ENCODE measurements at regions of chr6 and their contacts with region 1.

Region 1: DNA sequence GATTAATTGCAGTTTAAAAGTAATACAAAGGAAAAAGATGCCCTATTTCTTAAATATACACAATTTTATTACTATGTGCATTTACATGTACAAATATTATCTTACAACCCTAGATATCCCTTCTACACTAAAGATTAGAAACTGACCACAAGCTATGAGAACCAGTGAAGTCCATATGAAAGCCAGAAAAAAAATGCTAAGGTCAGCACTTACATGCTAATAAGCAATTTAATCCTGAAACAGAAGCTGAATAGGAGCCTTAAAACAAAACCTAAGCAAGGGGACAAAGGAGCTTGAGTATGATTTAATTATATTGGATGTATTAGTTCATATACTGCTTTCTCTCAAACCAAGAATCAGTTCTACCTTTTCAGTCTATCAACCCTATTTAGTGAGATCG is 14.2 kb downstream of the CEP162 start:
- DNase-seq: no peak
- H3K4me3 ChIP-seq: no peak overlapping the region
- H3K4me3 Mint-ChIP-seq: no peak overlapping the region
- H3K27ac Mint-ChIP-seq: no peak overlapping the region
- H3K4me1 ChIP-seq: peaks cover 7% of the 10 kb centered on the region
- H3K4me1 Mint-ChIP-seq: peaks cover 6% of the 10 kb centered on the region
- H3K27me3 ChIP-seq: no peaks in the 10 kb centered on the region
- H3K27me3 Mint-ChIP-seq: no peaks in the 10 kb centered on the region
- CTCF ChIP-seq: no peak

Region 2: DNA sequence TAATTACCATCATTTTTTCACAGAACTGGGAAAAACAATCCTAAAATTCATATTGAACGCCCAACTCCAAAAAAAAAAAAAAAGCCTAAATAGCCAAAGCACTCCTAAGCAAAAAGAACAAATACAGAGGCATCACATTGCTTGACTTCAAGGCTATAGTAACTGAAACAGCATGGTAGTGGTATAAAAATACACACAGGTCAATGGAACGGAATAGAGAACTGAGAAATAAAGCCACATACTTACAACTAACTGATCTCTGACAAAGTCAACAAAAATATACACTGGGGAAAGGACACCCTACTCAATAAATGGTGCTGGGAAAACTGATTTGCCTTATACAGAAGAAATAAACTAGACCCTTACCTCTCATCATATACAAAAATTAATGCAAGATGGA is 90.0 kb before region 1 on chr6:
- CTCF ChIA-PET with region 1: no interaction called
- POLR2A ChIA-PET with region 1: interaction called, 13 read pairs
- intact Hi-C with region 1: no loop called
- DNase-seq: no peak
- H3K4me3 ChIP-seq: no peak overlapping the region
- H3K4me3 Mint-ChIP-seq: no peak overlapping the region
- H3K27ac Mint-ChIP-seq: no peak overlapping the region
- H3K4me1 ChIP-seq: no peaks in the 10 kb centered on the region
- H3K4me1 Mint-ChIP-seq: no peaks in the 10 kb centered on the region
- H3K27me3 ChIP-seq: no peaks in the 10 kb centered on the region
- H3K27me3 Mint-ChIP-seq: no peaks in the 10 kb centered on the region
- CTCF ChIP-seq: no peak

Region 3: DNA sequence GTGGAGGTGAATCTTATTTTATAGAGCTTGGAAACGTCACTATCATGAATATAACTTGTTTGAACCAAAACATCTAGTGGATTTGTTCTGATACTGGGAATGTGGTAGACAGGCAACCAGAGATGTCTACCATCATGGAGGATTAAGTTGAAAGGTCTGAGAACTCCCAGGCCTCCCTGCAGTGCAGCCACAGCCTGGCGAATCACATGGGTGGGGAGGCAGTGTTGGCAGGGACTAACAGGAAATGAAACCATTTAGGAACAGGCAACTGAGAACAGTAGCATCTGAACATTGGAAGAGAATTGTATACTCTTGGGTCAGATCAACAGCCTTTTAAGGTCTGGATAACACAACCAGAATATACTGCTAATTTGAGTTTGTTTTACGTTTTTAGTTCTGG is 36.5 kb after region 1 on chr6:
- CTCF ChIA-PET with region 1: no interaction called
- POLR2A ChIA-PET with region 1: no interaction called
- intact Hi-C with region 1: no loop called
- DNase-seq: no peak
- H3K4me3 ChIP-seq: no peak overlapping the region
- H3K4me3 Mint-ChIP-seq: no peak overlapping the region
- H3K27ac Mint-ChIP-seq: no peak overlapping the region
- H3K4me1 ChIP-seq: no peaks in the 10 kb centered on the region
- H3K4me1 Mint-ChIP-seq: no peaks in the 10 kb centered on the region
- H3K27me3 ChIP-seq: no peaks in the 10 kb centered on the region
- H3K27me3 Mint-ChIP-seq: no peaks in the 10 kb centered on the region
- CTCF ChIP-seq: no peak

Measured in Caco-2 (cell line).